ENCODE measurements at regions of chr11 and their contacts with region 1.

Region 1: DNA sequence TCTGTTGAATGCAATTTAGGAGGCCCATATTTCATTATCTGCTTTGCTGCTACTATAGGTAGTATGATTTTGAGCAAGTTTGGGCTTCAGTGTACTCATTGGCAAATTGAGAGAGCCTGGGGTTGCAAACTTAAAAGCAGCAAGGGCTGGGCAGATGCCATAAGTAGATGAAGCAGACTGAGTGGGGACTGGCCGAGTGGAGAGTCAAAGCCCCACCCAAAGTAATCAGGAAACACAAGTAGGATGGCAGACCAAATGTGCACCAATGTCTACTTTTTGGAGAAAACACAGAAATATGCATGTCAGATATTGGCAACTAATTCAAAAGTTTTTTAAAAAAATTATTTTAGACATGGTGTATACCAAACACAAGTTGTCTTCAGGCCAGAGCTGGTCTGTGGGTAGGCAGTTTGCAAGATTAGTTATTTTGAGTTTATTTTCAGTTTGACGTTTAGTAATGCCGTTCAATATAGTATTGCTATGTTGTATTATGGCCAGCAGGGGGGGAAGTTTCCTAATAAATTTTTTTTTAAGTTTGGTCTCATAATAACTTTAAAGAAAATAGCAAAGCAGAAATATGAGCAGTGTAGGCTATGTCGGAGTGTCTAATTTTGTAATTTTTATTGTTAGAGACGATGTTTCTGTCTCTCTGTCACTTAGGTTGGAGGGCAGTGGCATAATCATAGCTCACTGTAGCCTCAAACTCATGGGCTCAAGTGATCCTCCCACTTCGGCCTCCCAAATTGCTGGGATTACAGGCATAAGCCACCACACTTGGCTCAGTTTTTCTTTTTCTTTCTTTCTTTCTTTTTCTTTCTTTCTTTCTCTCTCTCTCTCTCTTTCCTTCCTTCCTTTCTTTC is 105.1 kb downstream of the HIPK3 start:
- DNase-seq: no peak
- ATAC-seq: peak; percentile 65
- H3K4me3 Mint-ChIP-seq: no peak overlapping the region
- H3K27ac Mint-ChIP-seq: no peak overlapping the region
- H3K4me1 Mint-ChIP-seq: no peaks in the 10 kb centered on the region
- H3K27me3 Mint-ChIP-seq: no peaks in the 10 kb centered on the region
- CTCF ChIP-seq: no peak

Region 2: GRCh38 chr11:33457948-33458347 is 95.7 kb after region 1 on chr11:
- CTCF ChIA-PET with region 1: interaction called, 3 read pairs
- POLR2A ChIA-PET with region 1: no interaction called
- intact Hi-C with region 1: loop called (anchors 1 kb)
- DNase-seq: no peak
- ATAC-seq: no peak
- H3K4me3 Mint-ChIP-seq: no peak overlapping the region
- H3K27ac Mint-ChIP-seq: no peak overlapping the region
- H3K4me1 Mint-ChIP-seq: no peaks in the 10 kb centered on the region
- H3K27me3 Mint-ChIP-seq: peaks cover 6% of the 10 kb centered on the region
- CTCF ChIP-seq: no peak

Region 3: GRCh38 chr11:33542921-33543320 is 180.6 kb after region 1 on chr11:
- CTCF ChIA-PET with region 1: interaction called, 3 read pairs
- POLR2A ChIA-PET with region 1: no interaction called
- intact Hi-C with region 1: loop called (anchors 1 kb)
- DNase-seq: peak; percentile 20
- ATAC-seq: no peak
- H3K4me3 Mint-ChIP-seq: no peak overlapping the region
- H3K27ac Mint-ChIP-seq: no peak overlapping the region
- H3K4me1 Mint-ChIP-seq: no peaks in the 10 kb centered on the region
- H3K27me3 Mint-ChIP-seq: peaks cover 11% of the 10 kb centered on the region
- CTCF ChIP-seq: no peak

Region 4: GRCh38 chr11:33736148-33736809 is 374.0 kb after region 1 on chr11 and contains the start of gene CD59:
- CTCF ChIA-PET with region 1: interaction called, 3 read pairs
- POLR2A ChIA-PET with region 1: no interaction called
- intact Hi-C with region 1: loop called (anchors 1 kb)
- DNase-seq: peak; percentile 82
- ATAC-seq: peak; percentile 81
- H3K4me3 Mint-ChIP-seq: peak within 1 kb of the TSS; percentile 88
- H3K27ac Mint-ChIP-seq: peak within 1 kb of the TSS; percentile 81
- H3K4me1 Mint-ChIP-seq: peaks cover 39% of the 10 kb centered on the region
- H3K27me3 Mint-ChIP-seq: no peaks in the 10 kb centered on the region
- CTCF ChIP-seq: no peak
- total RNA-seq, gene CD59: 92.9 and 94.1 TPM in 2 replicates

Region 5: DNA sequence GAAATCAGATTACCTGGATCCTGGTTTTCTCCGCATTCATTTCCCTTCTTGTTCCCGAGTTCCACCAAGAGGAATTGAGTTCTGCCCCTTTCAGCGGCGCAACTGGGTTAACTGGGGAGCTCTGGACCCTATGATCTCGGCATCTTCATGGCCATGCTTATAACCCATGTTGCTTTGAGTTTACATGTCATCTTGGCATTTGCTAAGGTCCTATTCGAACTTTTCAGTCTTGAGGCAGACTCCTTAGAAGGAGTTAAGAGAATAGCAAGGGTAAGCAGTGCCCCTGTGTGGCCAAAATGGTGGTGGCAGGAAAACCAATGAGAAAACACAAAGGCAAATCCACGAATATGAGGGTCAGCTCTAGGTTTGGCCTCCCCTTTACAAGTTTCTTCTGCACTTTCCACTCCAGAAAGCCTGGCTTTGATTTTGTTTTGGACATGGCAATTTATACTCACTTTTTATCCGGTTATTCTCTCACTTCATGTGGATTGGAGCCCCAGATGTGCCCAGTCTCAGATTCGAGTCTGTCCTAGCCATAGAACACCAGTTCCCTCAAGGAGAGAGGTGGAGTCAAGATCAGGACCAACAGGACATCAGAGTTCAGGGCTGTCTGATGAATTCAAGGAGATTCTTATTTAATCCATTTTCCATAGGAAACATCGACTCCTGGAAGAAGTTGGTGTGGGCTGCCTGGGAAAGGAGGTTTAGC is 467.3 kb after region 1 on chr11:
- CTCF ChIA-PET with region 1: no interaction called
- POLR2A ChIA-PET with region 1: no interaction called
- intact Hi-C with region 1: loop called (anchors 1 kb)
- DNase-seq: no peak
- ATAC-seq: peak; percentile 83
- H3K4me3 Mint-ChIP-seq: peak overlapping the region; percentile 80
- H3K27ac Mint-ChIP-seq: no peak overlapping the region
- H3K4me1 Mint-ChIP-seq: peaks cover 5% of the 10 kb centered on the region
- H3K27me3 Mint-ChIP-seq: peaks cover 50% of the 10 kb centered on the region
- CTCF ChIP-seq: no peak

Measured in activated B cell treated with CpG ODN at 0.5 μM for 24 hours (primary cell).